ENCODE measurements at regions of chr17 and their contacts with region 1.

Region 1: DNA sequence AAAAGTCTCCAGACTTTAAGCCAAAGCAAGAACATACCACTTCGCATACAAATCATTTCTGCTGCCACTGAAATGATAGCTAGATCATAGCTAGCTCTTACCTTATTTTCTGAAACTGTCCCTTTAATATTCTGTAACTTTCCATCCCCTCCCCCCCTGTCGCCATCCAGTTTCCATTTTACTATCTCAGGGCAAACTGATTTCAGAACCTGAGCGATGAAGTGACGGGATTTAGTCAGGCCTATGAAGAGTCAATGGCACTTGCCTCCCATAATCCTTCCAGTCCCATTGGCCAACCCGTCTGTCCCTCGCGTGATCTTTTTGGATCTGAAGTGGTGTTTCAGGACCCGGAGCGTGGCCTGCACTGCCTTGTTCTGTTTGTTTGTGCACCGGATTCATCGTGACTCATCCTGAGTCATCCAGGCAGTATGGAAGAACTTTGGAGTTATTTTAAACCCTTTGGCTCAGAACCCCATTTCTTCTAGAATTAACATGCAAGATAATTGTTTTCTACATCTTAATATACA is 199.8 kb upstream of the CHMP6 start:
- DNase-seq: peak in 1 of 9 donors; percentile 58
- ATAC-seq: no peak
- H3K4me3 ChIP-seq: peak overlapping the region; percentile 37
- H3K4me3 Mint-ChIP-seq: peak overlapping the region; percentile 75 to 96 (median 88)
- H3K27ac ChIP-seq: peak overlapping the region; percentile 74
- H3K27ac Mint-ChIP-seq: peak overlapping the region; percentile 89 to 99 (median 96)
- H3K4me1 ChIP-seq: peaks cover 46 to 60% of the 10 kb centered on the region in 2 donors
- H3K4me1 Mint-ChIP-seq: peaks cover 51 to 93% (median 86%) of the 10 kb centered on the region in 7 donors
- H3K27me3 ChIP-seq: no peaks in the 10 kb centered on the region
- H3K27me3 Mint-ChIP-seq: no peaks in the 10 kb centered on the region

Region 2: DNA sequence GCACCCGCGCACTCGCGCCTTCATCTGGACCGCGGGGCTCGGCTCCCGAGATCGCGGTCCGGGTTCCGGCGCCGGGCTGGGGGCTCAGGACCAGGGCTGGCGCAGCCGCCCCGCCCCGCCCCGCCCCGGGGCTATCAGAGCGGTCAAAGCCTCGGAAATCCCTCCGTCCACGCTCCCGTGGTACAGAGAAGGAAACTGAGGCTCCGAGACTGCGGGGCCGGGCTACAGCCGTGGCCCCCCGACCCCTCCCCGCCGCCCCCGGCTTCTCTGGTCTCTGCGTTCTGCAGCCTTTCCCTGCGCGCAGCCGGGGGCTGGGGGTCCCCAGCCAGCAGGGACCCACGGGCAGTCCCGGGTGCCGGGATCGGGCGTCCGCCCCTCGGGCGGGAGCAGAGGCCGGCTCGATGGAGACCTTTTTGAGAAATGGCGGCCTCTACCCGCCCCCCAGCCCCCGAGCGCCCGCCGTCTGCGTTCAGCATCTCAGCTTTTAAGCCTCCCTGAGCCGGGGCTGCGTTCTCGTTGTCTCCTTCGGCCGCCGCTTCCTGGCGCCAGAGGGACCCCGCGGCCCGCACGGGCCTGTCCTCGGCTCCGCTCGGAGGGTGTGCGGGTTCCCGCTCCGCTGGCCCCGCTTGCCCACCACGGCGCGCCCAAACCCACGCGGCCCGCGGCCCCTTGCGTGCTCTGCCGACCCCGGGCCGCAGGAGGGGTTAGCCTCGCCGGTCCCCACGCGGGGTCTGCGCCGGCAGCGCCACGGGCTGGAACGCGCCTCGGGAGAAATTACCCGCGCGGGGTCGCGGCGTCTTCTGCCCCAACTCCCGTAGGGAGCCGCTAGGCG is 314.0 kb before region 1 on chr17:
- CTCF ChIA-PET with region 1: no interaction called
- POLR2A ChIA-PET with region 1: no interaction called
- intact Hi-C with region 1: loop called in 1 of 2 experiments (anchors 10 kb)
- DNase-seq: peak in 6 of 9 donors; percentile 29 to 58 (median 42)
- ATAC-seq: peak; percentile 31
- H3K4me3 ChIP-seq: no peak overlapping the region
- H3K4me3 Mint-ChIP-seq: peak overlapping the region in 1 of 10 donors; percentile 76
- H3K27ac ChIP-seq: no peak overlapping the region
- H3K27ac Mint-ChIP-seq: no peak overlapping the region
- H3K4me1 ChIP-seq: peaks cover 8 to 15% of the 10 kb centered on the region in 2 donors
- H3K4me1 Mint-ChIP-seq: peaks cover 8 to 24% (median 21%) of the 10 kb centered on the region in 7 donors
- H3K27me3 ChIP-seq: peaks cover 0 to 20% of the 10 kb centered on the region in 2 donors
- H3K27me3 Mint-ChIP-seq: peaks cover 46 to 58% (median 53%) of the 10 kb centered on the region in 5 donors

Region 3: DNA sequence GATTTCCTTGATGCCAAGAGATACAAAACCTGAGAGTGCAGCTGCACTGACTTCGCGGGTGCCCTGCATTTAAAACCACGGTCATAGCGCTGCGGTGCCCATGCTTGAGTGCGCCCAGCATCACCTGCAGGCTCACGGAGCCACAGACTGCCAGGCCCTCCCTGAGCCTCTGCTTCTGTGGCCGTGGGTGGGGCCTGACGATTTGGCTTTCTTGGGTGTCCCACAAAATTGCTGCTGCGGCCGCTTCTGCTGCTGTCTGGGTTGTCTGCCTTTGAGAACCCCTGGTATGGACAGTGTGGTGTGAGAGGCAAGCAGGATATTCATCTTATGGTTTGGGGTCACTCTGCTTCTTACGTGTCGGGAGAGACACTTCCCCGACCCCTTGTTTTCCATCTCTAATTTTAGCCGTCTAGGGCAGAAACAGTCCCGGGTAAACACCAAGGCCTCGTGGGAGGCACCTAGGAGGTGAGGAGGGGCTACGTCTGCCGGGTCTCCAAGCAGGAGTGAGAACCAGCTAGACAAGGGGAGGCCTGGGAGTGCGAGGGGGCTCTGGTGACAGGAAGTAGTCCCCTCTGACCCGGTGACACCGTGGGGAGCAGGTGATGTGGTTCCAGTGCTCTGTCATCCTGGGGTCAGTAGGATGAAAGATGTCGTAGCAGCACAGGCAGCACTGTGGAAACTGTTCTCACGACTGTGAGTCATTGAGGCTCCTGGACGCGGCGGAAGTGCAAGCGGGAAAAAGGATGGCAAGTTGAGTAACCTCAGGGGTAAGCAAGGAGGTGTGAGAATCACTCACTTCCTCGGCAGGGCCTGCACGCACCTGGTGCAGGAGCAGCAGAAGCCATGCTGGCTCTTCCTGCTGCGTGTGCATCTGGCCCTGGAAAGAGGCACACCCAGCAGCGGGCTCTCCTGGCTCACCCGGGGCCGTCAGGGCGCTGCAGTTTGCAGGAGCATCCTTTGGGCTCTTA is 70.9 kb before region 1 on chr17:
- CTCF ChIA-PET with region 1: no interaction called
- POLR2A ChIA-PET with region 1: no interaction called
- intact Hi-C with region 1: no loop called
- DNase-seq: peak in 3 of 9 donors; percentile 18 to 56 (median 21)
- ATAC-seq: peak; percentile 72
- H3K4me3 ChIP-seq: peak overlapping the region; percentile 25
- H3K4me3 Mint-ChIP-seq: peak overlapping the region in 8 of 10 donors; percentile 19 to 71 (median 47)
- H3K27ac ChIP-seq: peak overlapping the region; percentile 24
- H3K27ac Mint-ChIP-seq: peak overlapping the region; percentile 1 to 96 (median 74)
- H3K4me1 ChIP-seq: peaks cover 5 to 9% of the 10 kb centered on the region in 2 donors
- H3K4me1 Mint-ChIP-seq: peaks cover 27 to 79% (median 71%) of the 10 kb centered on the region in 7 donors
- H3K27me3 ChIP-seq: no peaks in the 10 kb centered on the region
- H3K27me3 Mint-ChIP-seq: no peaks in the 10 kb centered on the region

Region 4: DNA sequence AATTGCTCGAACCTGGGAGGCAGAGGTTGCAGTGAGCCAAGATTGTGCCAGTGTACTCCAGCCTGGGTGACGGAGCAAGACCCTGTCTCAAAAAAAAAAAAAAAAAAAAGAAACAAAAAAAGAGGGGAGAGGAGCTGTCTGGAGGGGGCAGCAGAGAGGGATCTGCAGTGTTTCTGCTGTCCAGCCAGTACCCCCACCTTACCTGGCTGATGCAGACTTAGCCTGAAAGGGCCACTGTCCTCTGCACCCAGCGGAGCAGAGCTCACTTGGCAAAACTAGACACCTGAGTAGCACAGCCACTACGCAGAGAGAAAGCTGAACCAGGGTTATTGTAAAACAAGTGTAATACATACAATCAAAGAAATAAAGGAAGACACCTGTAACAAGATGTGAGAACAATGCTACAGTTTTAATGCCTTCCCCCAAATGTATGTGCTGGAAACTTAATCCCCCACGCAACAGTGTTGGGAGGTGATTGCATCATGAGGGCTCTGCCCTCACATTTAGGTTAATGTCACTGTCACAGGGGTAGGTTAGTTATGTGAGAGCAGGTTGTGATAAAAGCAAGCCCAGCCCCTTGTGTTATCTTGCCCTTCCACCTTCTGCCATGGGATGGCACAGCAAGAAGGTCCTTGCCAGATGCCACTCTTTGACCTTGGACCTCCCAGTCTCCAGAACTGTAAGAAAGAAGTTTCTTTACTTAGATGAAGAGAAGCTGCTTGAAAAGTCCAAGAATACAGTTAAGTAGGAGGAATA is 36.0 kb before region 1 on chr17:
- CTCF ChIA-PET with region 1: no interaction called
- POLR2A ChIA-PET with region 1: interaction called, 4 read pairs
- intact Hi-C with region 1: loop called (anchors 2 to 5 kb)
- DNase-seq: no peak
- ATAC-seq: no peak
- H3K4me3 ChIP-seq: no peak overlapping the region
- H3K4me3 Mint-ChIP-seq: peak overlapping the region in 1 of 10 donors; percentile 5
- H3K27ac ChIP-seq: no peak overlapping the region
- H3K27ac Mint-ChIP-seq: peak overlapping the region; percentile 52 to 90 (median 80)
- H3K4me1 ChIP-seq: peaks cover 11 to 41% of the 10 kb centered on the region in 2 donors
- H3K4me1 Mint-ChIP-seq: peaks cover 36 to 87% (median 80%) of the 10 kb centered on the region in 7 donors
- H3K27me3 ChIP-seq: no peaks in the 10 kb centered on the region
- H3K27me3 Mint-ChIP-seq: no peaks in the 10 kb centered on the region

Region 5: DNA sequence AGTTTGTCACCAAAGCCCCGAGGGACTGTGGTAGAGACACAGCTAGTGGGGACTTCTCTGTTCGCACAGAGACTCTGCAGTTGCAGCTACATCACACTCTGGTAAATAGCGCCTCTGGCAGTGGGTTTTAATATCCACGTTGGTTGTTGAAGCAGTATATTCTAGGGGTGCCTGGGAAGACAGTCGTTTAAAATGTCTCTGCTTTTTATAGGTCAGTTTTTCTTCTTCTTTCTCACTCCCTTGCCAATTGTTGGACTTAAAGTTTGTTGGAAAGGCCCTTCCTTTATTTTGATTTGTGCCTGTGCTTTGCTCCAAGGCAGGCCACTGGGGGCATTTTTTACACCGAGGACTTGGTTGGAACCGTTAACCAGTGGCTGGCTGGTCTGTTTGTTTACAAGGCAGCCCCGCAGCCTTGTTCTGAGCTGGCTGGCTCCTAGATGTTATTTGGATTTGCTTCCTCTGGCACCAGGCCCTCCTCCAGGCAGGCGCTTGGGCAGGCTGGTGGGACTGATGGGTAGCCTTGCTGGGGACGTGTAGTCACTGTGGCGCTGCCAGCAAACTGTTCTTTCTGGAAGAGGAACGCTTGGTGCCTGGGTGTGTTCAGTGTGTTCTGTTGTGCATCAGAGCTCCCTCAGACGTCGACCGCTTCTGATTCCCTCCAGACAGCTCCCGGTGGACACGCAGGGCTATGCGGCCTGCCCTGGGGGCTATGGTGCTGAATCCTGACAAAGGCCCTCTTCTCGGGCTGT is 18.4 kb before region 1 on chr17:
- CTCF ChIA-PET with region 1: interaction called, 8 read pairs
- POLR2A ChIA-PET with region 1: interaction called, 9 read pairs
- intact Hi-C with region 1: loop called in 1 of 2 experiments (anchors 2 kb)
- DNase-seq: peak in 4 of 9 donors; percentile 37 to 62 (median 50)
- ATAC-seq: peak; percentile 57
- H3K4me3 ChIP-seq: no peak overlapping the region
- H3K4me3 Mint-ChIP-seq: peak overlapping the region; percentile 2 to 88 (median 70)
- H3K27ac ChIP-seq: peak overlapping the region; percentile 72
- H3K27ac Mint-ChIP-seq: peak overlapping the region; percentile 88 to 99 (median 94)
- H3K4me1 ChIP-seq: peaks cover 0 to 46% of the 10 kb centered on the region in 2 donors
- H3K4me1 Mint-ChIP-seq: peaks cover 45 to 94% (median 83%) of the 10 kb centered on the region in 7 donors
- H3K27me3 ChIP-seq: no peaks in the 10 kb centered on the region
- H3K27me3 Mint-ChIP-seq: no peaks in the 10 kb centered on the region

Region 6: GRCh38 chr17:80805032-80805751 is 13.4 kb after region 1 on chr17:
- CTCF ChIA-PET with region 1: interaction called, 12 read pairs
- POLR2A ChIA-PET with region 1: interaction called, 43 read pairs
- intact Hi-C with region 1: no loop called
- DNase-seq: peak in 1 of 9 donors; percentile 16
- ATAC-seq: no peak
- H3K4me3 ChIP-seq: no peak overlapping the region
- H3K4me3 Mint-ChIP-seq: peak overlapping the region in 3 of 10 donors; percentile 72 to 83 (median 76)
- H3K27ac ChIP-seq: no peak overlapping the region
- H3K27ac Mint-ChIP-seq: peak overlapping the region in 8 of 9 donors; percentile 5 to 95 (median 72)
- H3K4me1 ChIP-seq: peaks cover 0 to 4% of the 10 kb centered on the region in 2 donors
- H3K4me1 Mint-ChIP-seq: peaks cover 16 to 55% (median 39%) of the 10 kb centered on the region in 7 donors
- H3K27me3 ChIP-seq: no peaks in the 10 kb centered on the region
- H3K27me3 Mint-ChIP-seq: no peaks in the 10 kb centered on the region

Region 7: GRCh38 chr17:80855948-80856862 is 64.4 kb after region 1 on chr17:
- CTCF ChIA-PET with region 1: no interaction called
- POLR2A ChIA-PET with region 1: interaction called, 4 read pairs
- intact Hi-C with region 1: loop called in 1 of 2 experiments (anchors 5 kb)
- DNase-seq: peak in 2 of 9 donors; percentile 26 to 80
- ATAC-seq: peak; percentile 92
- H3K4me3 ChIP-seq: no peak overlapping the region
- H3K4me3 Mint-ChIP-seq: peak overlapping the region in 6 of 10 donors; percentile 18 to 71 (median 30)
- H3K27ac ChIP-seq: peak overlapping the region; percentile 19
- H3K27ac Mint-ChIP-seq: peak overlapping the region in 8 of 9 donors; percentile 23 to 95 (median 70)
- H3K4me1 ChIP-seq: peaks cover 10 to 27% of the 10 kb centered on the region in 2 donors
- H3K4me1 Mint-ChIP-seq: peaks cover 23 to 78% (median 55%) of the 10 kb centered on the region in 7 donors
- H3K27me3 ChIP-seq: no peaks in the 10 kb centered on the region
- H3K27me3 Mint-ChIP-seq: no peaks in the 10 kb centered on the region